CD8-positive, alpha-beta T cell (primary cell): ENCODE measurements at regions of chr21 and their contacts with region 1.

Region 1: DNA sequence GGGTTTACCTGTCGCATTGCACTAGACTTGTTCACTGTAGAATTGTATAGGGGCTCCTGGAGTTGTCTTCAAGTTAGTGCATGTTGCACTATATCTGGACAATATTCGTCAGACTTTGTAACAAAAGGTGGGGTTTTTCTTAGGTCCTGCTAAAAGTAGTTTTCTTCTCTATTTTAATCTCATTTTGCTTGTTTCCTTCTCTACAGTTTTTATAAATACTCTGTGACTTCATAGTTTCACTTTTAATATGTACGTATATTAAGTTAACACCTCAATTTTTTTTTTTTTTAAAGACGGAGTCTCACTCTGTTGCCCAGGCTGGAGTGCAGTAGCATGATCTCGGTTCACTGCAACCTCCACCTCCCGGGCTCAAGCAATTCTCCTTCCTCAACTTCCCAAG is 26.5 kb upstream of the MRPS6 start:
- DNase-seq: peak in 1 of 9 experiments; percentile 37
- ATAC-seq: peak; percentile 34
- H3K4me3 ChIP-seq: peak overlapping the region in 1 of 2 experiments; percentile 20
- H3K4me3 Mint-ChIP-seq: peak overlapping the region; percentile 71
- H3K27ac ChIP-seq: peak overlapping the region in 1 of 2 experiments; percentile 20
- H3K27ac Mint-ChIP-seq: no peak overlapping the region
- H3K4me1 ChIP-seq: no peaks in the 10 kb centered on the region
- H3K4me1 Mint-ChIP-seq: peaks cover 8% of the 10 kb centered on the region
- H3K27me3 ChIP-seq: no peaks in the 10 kb centered on the region
- H3K27me3 Mint-ChIP-seq: no peaks in the 10 kb centered on the region
- CTCF ChIP-seq: no peak

Region 2: DNA sequence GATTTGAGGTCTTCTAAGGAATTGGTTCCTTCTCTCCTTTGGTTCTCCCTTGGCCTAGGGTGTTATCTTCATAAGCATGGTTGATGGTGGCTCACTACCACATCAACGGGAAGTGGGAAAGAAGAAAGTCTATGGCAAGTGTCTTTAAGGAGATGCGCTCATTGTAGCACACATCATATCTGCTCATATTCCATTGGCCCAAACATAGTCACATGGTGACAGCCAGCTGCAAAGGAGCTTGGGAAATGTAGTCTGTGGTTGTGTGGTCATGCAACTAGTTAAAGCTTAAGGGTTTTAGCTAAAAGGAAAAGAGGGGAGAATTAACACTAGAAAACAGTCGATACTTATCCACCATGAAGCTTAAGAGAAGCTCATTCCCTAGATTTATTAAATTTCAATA is 15.1 kb after region 1 on chr21:
- CTCF ChIA-PET with region 1: no interaction called
- POLR2A ChIA-PET with region 1: no interaction called
- intact Hi-C with region 1: loop called in 1 of 2 experiments (anchors 2 kb)
- DNase-seq: peak in 1 of 9 experiments; percentile 19
- ATAC-seq: no peak
- H3K4me3 ChIP-seq: no peak overlapping the region
- H3K4me3 Mint-ChIP-seq: no peak overlapping the region
- H3K27ac ChIP-seq: no peak overlapping the region
- H3K27ac Mint-ChIP-seq: no peak overlapping the region
- H3K4me1 ChIP-seq: no peaks in the 10 kb centered on the region
- H3K4me1 Mint-ChIP-seq: no peaks in the 10 kb centered on the region
- H3K27me3 ChIP-seq: no peaks in the 10 kb centered on the region
- H3K27me3 Mint-ChIP-seq: no peaks in the 10 kb centered on the region
- CTCF ChIP-seq: no peak